ENCODE measurements at regions of chr16 and their contacts with region 1.

Region 1: GRCh38 chr16:3317315-3317999 is 12.2 kb downstream of the ZNF75A start:
- DNase-seq: peak; percentile 16
- ATAC-seq: no peak
- H3K4me3 ChIP-seq: peak overlapping the region in 1 of 5 experiments; percentile 3
- H3K4me3 Mint-ChIP-seq: no peak overlapping the region
- H3K27ac ChIP-seq: no peak overlapping the region
- H3K27ac Mint-ChIP-seq: no peak overlapping the region
- H3K4me1 ChIP-seq: no peaks in the 10 kb centered on the region
- H3K4me1 Mint-ChIP-seq: no peaks in the 10 kb centered on the region
- H3K27me3 ChIP-seq: no peaks in the 10 kb centered on the region
- H3K27me3 Mint-ChIP-seq: no peaks in the 10 kb centered on the region
- CTCF ChIP-seq: no peak

Region 2: DNA sequence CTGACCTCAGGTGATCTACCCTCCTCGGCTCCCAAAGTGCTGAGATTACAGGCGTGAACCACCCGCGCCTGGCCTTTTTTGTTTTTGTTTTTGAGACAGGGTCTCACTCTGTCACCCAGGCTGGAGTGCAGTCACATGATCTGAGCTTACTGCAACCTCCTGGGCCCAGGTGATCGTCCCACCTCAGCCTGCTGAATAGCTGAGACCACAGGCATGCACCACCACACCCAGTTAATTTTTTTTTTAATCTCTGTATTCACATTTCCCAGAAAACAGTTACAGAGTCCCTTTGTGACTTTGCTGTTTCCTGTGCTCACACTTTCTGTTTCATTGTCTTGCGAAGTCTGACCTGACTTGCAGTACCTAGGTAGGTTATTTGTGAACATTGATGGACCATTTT is 186.1 kb after region 1 on chr16:
- CTCF ChIA-PET with region 1: no interaction called
- POLR2A ChIA-PET with region 1: interaction called, 13 read pairs
- intact Hi-C with region 1: no loop called
- DNase-seq: no peak
- ATAC-seq: no peak
- H3K4me3 ChIP-seq: no peak overlapping the region
- H3K4me3 Mint-ChIP-seq: peak overlapping the region; percentile 32
- H3K27ac ChIP-seq: no peak overlapping the region
- H3K27ac Mint-ChIP-seq: no peak overlapping the region
- H3K4me1 ChIP-seq: peaks cover 11 to 22% of the 10 kb centered on the region in 2 donors
- H3K4me1 Mint-ChIP-seq: peaks cover 30% of the 10 kb centered on the region
- H3K27me3 ChIP-seq: no peaks in the 10 kb centered on the region
- H3K27me3 Mint-ChIP-seq: no peaks in the 10 kb centered on the region
- CTCF ChIP-seq: no peak

Region 3: DNA sequence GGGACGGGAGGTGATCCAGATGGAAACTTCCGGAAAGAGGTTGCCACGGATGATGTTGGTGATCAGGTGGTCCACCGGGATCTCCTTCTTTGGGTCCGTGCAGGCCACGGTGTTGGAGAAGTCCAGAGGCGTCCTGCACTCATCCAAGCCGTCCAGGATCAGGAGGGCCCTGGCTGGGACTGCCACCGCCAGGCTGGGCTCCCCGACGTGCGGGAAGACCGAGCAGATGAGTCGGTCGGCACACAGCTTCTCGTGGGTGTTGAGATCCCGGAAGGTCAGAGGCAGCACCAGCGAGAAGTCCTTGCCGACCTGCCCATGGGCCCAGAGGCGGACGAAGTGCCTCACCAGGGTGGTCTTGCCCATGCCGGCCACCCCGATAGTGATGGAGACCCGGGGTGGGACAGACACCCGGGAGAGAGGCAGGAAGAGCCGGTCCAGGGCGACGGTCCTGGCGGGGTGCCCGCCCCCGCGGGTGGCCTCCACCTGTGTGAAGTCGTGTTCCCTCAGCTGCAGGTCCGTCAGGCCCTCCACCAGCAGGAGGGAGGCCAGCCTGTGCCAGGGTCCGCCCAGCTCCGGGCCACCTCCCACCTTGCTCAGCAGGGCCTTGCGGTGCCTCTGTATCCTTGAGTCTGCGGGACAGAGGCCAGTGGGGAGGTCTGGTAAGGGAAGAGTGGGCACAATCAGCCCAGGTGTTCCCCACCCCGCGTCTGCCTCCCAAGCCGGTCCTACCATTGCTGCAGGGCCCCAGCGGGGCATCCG is 246.9 kb after region 1 on chr16:
- CTCF ChIA-PET with region 1: no interaction called
- POLR2A ChIA-PET with region 1: no interaction called
- intact Hi-C with region 1: no loop called
- DNase-seq: no peak
- ATAC-seq: no peak
- H3K4me3 ChIP-seq: no peak overlapping the region
- H3K4me3 Mint-ChIP-seq: no peak overlapping the region
- H3K27ac ChIP-seq: no peak overlapping the region
- H3K27ac Mint-ChIP-seq: no peak overlapping the region
- H3K4me1 ChIP-seq: no peaks in the 10 kb centered on the region
- H3K4me1 Mint-ChIP-seq: no peaks in the 10 kb centered on the region
- H3K27me3 ChIP-seq: no peaks in the 10 kb centered on the region
- H3K27me3 Mint-ChIP-seq: no peaks in the 10 kb centered on the region
- CTCF ChIP-seq: no peak